H1 (cell line): ENCODE measurements at regions of chr3 and their contacts with region 1.

Region 1: DNA sequence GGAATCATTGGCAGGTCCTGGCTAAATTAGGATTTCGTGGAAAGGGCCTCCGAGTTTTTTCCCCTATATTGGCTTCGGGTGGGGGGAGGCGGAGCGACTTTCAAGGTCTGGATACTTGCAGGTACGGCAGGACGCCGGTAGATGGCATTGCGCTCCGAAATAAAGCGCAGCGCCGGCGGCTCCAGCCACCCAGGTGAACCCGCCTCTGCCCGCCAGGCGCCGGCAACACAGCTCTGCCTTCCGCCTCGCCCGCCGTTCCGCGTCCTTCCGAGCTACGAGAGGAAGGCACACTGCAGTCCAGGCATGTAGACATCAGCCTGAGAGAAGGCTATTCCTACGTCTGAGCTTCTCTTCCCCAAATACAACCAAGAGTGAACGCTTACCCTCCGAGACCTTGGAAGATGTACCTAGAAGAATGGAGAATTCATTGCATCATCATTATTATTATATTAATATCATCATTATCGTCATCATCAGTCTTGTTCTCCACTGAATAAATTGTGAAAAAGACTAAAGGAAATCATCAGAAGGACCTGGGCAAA is 514.1 kb downstream of the MECOM start:
- DNase-seq: peak; percentile 56 to 87
- H3K4me3 ChIP-seq: peak overlapping the region; percentile 30 to 68 (median 64); a peak in 7 of 8 replicates
- H3K27ac ChIP-seq: no peak overlapping the region
- H3K4me1 ChIP-seq: peaks cover 0 to 12% (median under 1%) of the 10 kb centered on the region in 4 experiments; a peak in 3 of 7 replicates
- H3K27me3 ChIP-seq: peaks cover 11 to 36% (median 24%) of the 10 kb centered on the region in 4 experiments
- CTCF ChIP-seq: peak; percentile 75 to 88 (median 84)
- EP300 ChIP-seq: no peak
- POLR2A ChIP-seq: no peak
- RAD21 ChIP-seq: peak; percentile 82 to 86

Region 2: GRCh38 chr3:169117282-169117681 is 32.1 kb before region 1 on chr3:
- CTCF ChIA-PET with region 1: no interaction called
- POLR2A ChIA-PET with region 1: no interaction called
- DNase-seq: no peak
- H3K4me3 ChIP-seq: no peak overlapping the region
- H3K27ac ChIP-seq: no peak overlapping the region
- H3K4me1 ChIP-seq: no peaks in the 10 kb centered on the region
- H3K27me3 ChIP-seq: no peaks in the 10 kb centered on the region
- CTCF ChIP-seq: no peak
- EP300 ChIP-seq: no peak
- POLR2A ChIP-seq: no peak
- RAD21 ChIP-seq: no peak

Region 3: GRCh38 chr3:169133178-169134161 is 15.9 kb before region 1 on chr3:
- CTCF ChIA-PET with region 1: interaction called, 20 read pairs
- POLR2A ChIA-PET with region 1: no interaction called
- DNase-seq: no peak
- H3K4me3 ChIP-seq: no peak overlapping the region
- H3K27ac ChIP-seq: no peak overlapping the region
- H3K4me1 ChIP-seq: peaks cover 0 to 3% (median 0%) of the 10 kb centered on the region in 4 experiments; a peak in 1 of 7 replicates
- H3K27me3 ChIP-seq: no peaks in the 10 kb centered on the region
- CTCF ChIP-seq: peak in 1 of 3 experiments; percentile 7; a peak in 2 of 4 replicates
- EP300 ChIP-seq: no peak
- POLR2A ChIP-seq: no peak
- RAD21 ChIP-seq: peak in 1 of 2 experiments; percentile 28; a peak in 3 of 4 replicates

Region 4: GRCh38 chr3:169181666-169182065 is 32.2 kb after region 1 on chr3:
- CTCF ChIA-PET with region 1: interaction called, 13 read pairs
- POLR2A ChIA-PET with region 1: interaction called, 3 read pairs
- DNase-seq: no peak
- H3K4me3 ChIP-seq: no peak overlapping the region
- H3K27ac ChIP-seq: no peak overlapping the region
- H3K4me1 ChIP-seq: no peaks in the 10 kb centered on the region
- H3K27me3 ChIP-seq: no peaks in the 10 kb centered on the region
- CTCF ChIP-seq: no peak
- EP300 ChIP-seq: no peak
- POLR2A ChIP-seq: no peak
- RAD21 ChIP-seq: no peak

Region 5: GRCh38 chr3:169604568-169604967 is 455.1 kb after region 1 on chr3:
- CTCF ChIA-PET with region 1: interaction called, 17 read pairs
- POLR2A ChIA-PET with region 1: no interaction called
- DNase-seq: no peak
- H3K4me3 ChIP-seq: peak overlapping the region in 1 of 4 experiments; percentile 27; a peak in 1 of 8 replicates
- H3K27ac ChIP-seq: no peak overlapping the region
- H3K4me1 ChIP-seq: peaks cover 0 to 3% (median 2%) of the 10 kb centered on the region in 4 experiments; a peak in 3 of 7 replicates
- H3K27me3 ChIP-seq: no peaks in the 10 kb centered on the region
- CTCF ChIP-seq: peak in 2 of 3 experiments; percentile 53 to 57; a peak in 3 of 4 replicates
- EP300 ChIP-seq: no peak
- POLR2A ChIP-seq: no peak
- RAD21 ChIP-seq: peak; percentile 50 to 62

Region 6: GRCh38 chr3:169668957-169669681 is 519.7 kb after region 1 on chr3:
- CTCF ChIA-PET with region 1: interaction called, 69 read pairs
- POLR2A ChIA-PET with region 1: interaction called, 3 read pairs
- DNase-seq: peak in 1 of 2 experiments; percentile 87
- H3K4me3 ChIP-seq: peak overlapping the region; percentile 42 to 69 (median 58); a peak in 7 of 8 replicates
- H3K27ac ChIP-seq: no peak overlapping the region
- H3K4me1 ChIP-seq: peaks cover 11 to 25% (median 22%) of the 10 kb centered on the region in 4 experiments
- H3K27me3 ChIP-seq: peaks cover 35 to 55% (median 50%) of the 10 kb centered on the region in 4 experiments
- CTCF ChIP-seq: peak; percentile 76 to 88 (median 80)
- EP300 ChIP-seq: peak in 1 of 2 experiments; percentile 65; a peak in 1 of 3 replicates
- POLR2A ChIP-seq: no peak
- RAD21 ChIP-seq: peak; percentile 94 to 98